Transverse colon (tissue), 4 donors: ENCODE measurements at regions of chrX and their contacts with region 1.

Region 1: DNA sequence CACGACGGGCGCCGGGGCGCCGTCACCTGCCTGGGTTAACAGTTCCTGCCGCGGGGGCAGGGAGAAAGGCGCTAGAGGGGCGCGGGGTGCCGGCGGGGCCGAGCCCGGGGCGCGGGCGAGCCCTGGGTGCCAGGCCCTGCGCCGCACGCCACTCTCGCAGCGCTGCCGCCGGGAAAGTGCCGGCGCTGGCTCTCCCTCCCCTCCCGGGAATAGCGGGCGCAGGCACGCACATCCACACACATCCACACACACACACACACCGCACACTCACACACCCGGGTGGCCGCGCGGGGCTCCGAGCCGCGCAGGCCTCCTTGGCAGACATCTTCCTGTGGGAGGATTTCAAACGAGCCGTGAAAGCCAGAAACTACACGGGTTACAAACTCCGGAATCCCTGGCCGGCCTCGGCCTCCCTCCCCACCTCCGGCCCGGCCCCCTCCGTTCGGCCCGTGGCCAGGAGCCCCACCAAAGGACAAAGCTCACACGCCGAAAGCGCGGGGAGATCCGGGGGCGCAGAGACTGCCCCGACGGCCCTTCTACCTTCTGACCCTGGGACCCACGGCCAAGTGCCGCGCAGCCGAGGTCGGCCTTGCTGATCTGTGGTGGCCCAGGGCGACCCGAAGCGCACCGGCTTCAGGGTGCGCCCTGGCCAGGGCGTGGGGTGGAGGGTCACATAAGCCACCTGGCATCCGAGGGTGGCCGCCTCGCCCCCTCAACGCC is 92.3 kb downstream of the BCOR start:
- DNase-seq: no peak
- H3K4me3 ChIP-seq: peak overlapping the region in 3 of 4 donors; percentile 7 to 36 (median 22)
- H3K27ac ChIP-seq: peak overlapping the region in 2 of 4 donors; percentile 52 to 58
- H3K4me1 ChIP-seq: peaks cover 0 to 27% (median 15%) of the 10 kb centered on the region in 4 donors
- H3K27me3 ChIP-seq: no peaks in the 10 kb centered on the region
- CTCF ChIP-seq: no peak
- EP300 ChIP-seq: no peak
- POLR2A ChIP-seq: no peak

Region 2: DNA sequence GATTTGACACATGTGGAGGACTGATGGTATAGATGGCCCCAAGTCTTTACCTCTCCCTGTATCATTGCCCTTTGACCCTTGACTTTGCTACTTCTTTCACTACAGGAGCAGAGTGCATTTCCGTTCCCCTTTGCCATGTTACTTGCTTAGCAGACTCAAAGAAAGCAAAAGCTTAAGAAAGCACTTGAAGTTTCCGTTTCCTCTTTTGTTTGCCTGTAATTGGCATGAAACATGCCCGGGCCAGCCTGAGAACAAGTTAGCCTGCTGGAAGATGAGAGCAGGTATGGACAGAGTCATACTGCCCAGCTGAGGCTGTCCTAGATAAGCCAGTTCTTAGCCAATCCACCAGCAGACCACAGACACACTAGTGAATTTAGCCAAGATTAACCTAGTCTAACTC is 113.7 kb before region 1 on chrX:
- in situ Hi-C with region 1: no loop called
- intact Hi-C with region 1: no loop called
- DNase-seq: no peak
- H3K4me3 ChIP-seq: no peak overlapping the region
- H3K27ac ChIP-seq: no peak overlapping the region
- H3K4me1 ChIP-seq: peaks cover 0 to 18% (median 7%) of the 10 kb centered on the region in 4 donors
- H3K27me3 ChIP-seq: no peaks in the 10 kb centered on the region
- CTCF ChIP-seq: no peak
- EP300 ChIP-seq: no peak
- POLR2A ChIP-seq: no peak

Region 3: DNA sequence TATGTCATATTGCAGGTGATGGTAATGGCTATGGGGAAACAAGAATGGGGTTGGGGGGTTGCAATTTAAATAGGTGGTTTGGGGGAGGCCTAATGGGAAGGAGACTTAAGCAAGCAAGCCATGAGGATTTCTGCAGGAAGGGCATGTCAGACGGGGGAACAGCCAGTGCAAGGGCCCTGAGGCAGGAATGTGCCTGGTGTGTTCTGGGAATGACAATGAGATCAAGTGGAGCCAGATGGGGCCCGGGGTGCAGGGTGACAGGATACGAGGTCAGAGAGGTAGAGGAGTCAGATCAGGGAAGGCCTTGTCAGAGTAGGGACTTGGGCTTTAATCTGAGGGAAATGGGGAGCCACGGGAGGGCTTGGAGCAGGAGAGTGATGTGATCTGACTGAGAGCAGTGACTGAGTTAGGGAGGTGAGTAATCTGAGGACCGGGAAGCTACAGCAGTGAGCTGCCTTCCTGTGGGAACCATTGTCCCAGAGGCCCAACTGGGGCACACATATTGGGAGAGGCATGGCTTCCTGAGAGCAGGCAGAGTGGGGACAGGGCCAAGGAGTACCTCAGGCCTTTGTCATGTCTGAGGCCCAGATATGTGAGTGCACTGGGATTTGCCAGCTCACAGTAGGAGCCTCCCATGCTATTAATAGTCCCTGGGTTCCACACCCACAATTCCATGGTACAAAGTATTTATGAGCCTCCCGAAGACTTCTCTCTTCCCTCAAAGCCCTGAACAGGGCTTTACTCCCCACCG is 47.5 kb before region 1 on chrX:
- in situ Hi-C with region 1: no loop called
- intact Hi-C with region 1: loop called (anchors 2 kb)
- DNase-seq: no peak
- H3K4me3 ChIP-seq: no peak overlapping the region
- H3K27ac ChIP-seq: no peak overlapping the region
- H3K4me1 ChIP-seq: peaks cover 0 to 9% (median 6%) of the 10 kb centered on the region in 4 donors
- H3K27me3 ChIP-seq: no peaks in the 10 kb centered on the region
- CTCF ChIP-seq: no peak
- EP300 ChIP-seq: no peak
- POLR2A ChIP-seq: no peak

Region 4: DNA sequence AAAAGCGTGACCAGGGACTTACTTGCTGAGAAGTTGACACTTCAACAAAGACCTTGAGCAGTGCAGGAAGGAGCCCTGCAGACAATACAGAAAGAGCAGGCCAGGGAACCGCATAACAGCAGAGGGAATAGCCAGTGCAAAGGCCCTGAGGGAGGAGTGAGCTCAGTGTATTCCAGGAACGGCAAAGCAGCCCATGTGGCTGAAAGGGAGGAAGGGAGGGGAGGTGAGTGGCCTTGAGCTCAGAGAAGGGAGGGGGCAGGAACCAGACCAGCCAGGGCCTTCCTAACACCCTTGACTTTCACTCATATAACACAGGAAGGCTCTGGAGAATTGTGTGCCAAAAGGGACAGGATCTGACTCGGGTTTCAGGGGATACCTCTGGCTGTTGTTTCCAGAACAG is 19.9 kb before region 1 on chrX:
- in situ Hi-C with region 1: no loop called
- intact Hi-C with region 1: no loop called
- DNase-seq: no peak
- H3K4me3 ChIP-seq: no peak overlapping the region
- H3K27ac ChIP-seq: no peak overlapping the region
- H3K4me1 ChIP-seq: peaks cover 0 to 8% (median 2%) of the 10 kb centered on the region in 4 donors
- H3K27me3 ChIP-seq: no peaks in the 10 kb centered on the region
- CTCF ChIP-seq: no peak
- EP300 ChIP-seq: no peak
- POLR2A ChIP-seq: no peak